PC-9 (cell line): ENCODE measurements at regions of chr20 and their contacts with region 1.

Region 1: GRCh38 chr20:17569616-17570346 is at the start of gene DSTN:
- DNase-seq: peak; percentile 91 to 97
- H3K4me3 ChIP-seq: peak within 1 kb of the TSS; percentile 95
- H3K27ac ChIP-seq: peak within 1 kb of the TSS; percentile 84
- H3K4me1 ChIP-seq: peaks cover 54% of the 10 kb centered on the region
- H3K27me3 ChIP-seq: no peaks in the 10 kb centered on the region
- CTCF ChIP-seq: no peak
- total RNA-seq, gene DSTN: 296 and 366 TPM in 2 replicates

Region 2: DNA sequence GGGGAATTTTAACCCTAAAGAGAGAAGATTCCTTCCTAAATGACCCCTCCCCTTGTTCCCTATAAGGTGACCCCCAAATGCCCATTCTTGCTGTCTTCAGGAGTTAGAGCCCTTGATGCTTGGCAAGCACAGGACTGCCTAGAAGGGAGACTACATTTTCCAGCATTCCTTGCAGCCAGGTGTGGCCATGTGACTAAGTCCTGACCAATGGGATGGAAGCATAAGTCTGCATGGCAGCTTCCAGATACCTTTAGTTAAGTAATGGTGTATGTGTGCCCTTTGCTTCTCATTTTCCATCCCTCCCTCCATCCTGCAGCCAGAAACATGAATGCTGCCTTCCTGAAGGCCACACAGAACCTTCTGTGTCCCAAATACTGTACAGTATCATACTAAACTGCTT is 44.1 kb before region 1 on chr20:
- CTCF ChIA-PET with region 1: no interaction called
- POLR2A ChIA-PET with region 1: no interaction called
- intact Hi-C with region 1: no loop called
- DNase-seq: peak; percentile 32 to 49
- H3K4me3 ChIP-seq: no peak overlapping the region
- H3K27ac ChIP-seq: no peak overlapping the region
- H3K4me1 ChIP-seq: peaks cover 4% of the 10 kb centered on the region; the same call in 1 of the 2 replicates
- H3K27me3 ChIP-seq: no peaks in the 10 kb centered on the region
- CTCF ChIP-seq: no peak

Region 3: DNA sequence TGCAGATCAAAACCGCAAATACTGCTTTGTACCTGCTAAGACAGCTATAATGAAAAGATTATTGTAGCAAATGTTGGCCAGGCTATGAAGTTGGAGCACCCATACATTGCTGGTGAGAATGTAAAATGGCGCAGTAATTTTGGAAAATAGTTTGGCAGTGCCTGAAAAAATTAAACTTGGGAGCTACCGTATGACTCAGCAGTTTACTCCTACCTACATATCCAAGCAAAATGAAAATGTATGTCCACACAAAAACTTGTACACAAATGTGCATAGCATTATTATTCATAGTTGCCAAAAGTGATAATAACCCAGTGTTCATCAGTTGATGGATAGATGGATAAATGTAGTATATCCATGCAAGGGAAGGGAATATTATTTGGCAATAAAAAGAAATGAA is 13.3 kb after region 1 on chr20:
- CTCF ChIA-PET with region 1: no interaction called
- POLR2A ChIA-PET with region 1: interaction called, 14 read pairs
- intact Hi-C with region 1: no loop called
- DNase-seq: no peak
- H3K4me3 ChIP-seq: no peak overlapping the region
- H3K27ac ChIP-seq: peak overlapping the region; percentile 10; the same call in 1 of the 2 replicates
- H3K4me1 ChIP-seq: peaks cover 33% of the 10 kb centered on the region
- H3K27me3 ChIP-seq: no peaks in the 10 kb centered on the region
- CTCF ChIP-seq: no peak

Region 4: DNA sequence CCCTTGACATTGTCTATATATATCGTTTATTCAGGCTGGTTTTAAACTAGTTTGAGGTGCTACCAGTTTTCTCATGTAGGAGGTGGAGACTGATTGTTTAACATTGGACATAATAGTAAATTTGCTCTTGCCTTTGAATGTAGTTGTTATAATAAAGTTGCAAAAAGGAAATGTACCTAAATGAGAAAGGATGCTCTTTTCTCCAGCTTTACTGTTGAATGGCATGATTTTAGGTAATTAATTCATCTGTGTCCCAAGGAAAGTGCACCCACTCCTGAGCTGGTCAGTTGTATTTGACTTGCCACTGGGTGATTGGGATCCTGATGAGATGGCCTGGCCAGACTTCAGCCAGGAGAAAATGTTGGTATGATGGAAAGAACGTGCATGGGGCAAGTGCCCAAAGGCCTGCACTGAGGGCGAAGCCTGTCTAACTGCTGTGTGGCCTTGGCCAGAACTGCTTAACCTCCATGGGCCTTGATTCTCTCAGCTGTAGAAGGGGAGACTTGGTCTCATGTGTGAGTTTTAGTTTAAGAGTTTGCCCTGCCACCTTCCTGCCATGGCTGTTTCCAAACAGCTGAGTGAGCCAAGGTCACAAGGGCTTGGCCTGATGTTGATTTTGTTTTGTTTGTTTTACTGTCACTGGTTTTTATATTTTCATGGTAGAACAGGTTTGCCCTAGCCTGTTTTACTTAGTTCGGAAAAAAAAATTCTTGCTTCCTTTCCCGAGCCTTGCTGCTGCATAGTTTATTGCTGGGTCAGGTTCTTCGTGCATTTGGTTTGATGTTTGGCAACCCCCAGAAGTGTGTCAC is 35.3 kb after region 1 on chr20:
- CTCF ChIA-PET with region 1: no interaction called
- POLR2A ChIA-PET with region 1: interaction called, 15 read pairs
- intact Hi-C with region 1: loop called (anchors 2 kb)
- DNase-seq: peak; percentile 41 to 82
- H3K4me3 ChIP-seq: no peak overlapping the region
- H3K27ac ChIP-seq: peak overlapping the region; percentile 40
- H3K4me1 ChIP-seq: peaks cover 31% of the 10 kb centered on the region
- H3K27me3 ChIP-seq: no peaks in the 10 kb centered on the region
- CTCF ChIP-seq: no peak

Region 5: DNA sequence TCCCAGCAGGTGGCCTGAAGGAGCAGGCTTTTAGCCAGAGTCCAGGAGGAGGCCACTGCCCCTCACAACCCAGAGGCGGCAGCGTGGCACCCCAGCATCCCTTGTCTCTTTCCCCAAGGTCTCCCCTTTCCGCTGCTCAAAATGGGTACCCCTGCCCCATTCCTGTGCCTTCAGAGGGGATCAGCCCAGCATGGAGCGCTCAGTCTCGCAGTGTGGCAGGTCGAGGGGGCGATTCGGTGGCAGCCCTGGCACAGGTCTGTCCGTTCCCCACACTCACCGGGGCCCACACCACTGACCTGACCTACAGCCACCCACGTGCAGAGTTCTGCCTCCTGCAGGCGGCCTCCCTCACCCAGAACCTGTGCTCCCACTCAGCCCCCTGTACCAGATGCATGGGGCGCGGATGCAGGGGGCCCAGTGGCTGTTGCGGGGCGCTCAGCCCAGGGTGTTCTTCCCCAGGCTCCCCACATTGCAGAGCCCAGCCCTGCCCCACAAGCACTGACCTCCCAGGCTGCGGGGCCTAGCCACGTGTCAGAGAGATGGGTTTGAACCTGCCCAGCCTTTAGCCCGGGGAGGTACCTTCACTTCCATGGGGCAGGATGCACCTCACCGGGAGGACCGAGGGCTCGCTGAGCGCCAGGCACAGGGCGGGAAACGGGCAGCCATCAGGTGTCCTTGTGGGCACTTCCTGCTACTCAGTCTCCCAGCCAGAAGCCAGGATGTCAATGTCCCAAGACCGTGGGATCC is 41.9 kb after region 1 on chr20:
- CTCF ChIA-PET with region 1: no interaction called
- POLR2A ChIA-PET with region 1: interaction called, 15 read pairs
- intact Hi-C with region 1: no loop called
- DNase-seq: peak in 1 of 2 experiments; percentile 48
- H3K4me3 ChIP-seq: no peak overlapping the region
- H3K27ac ChIP-seq: no peak overlapping the region
- H3K4me1 ChIP-seq: no peaks in the 10 kb centered on the region
- H3K27me3 ChIP-seq: no peaks in the 10 kb centered on the region
- CTCF ChIP-seq: peak; percentile 58